ENCODE measurements at regions of chr11 and their contacts with region 1.

Region 1: DNA sequence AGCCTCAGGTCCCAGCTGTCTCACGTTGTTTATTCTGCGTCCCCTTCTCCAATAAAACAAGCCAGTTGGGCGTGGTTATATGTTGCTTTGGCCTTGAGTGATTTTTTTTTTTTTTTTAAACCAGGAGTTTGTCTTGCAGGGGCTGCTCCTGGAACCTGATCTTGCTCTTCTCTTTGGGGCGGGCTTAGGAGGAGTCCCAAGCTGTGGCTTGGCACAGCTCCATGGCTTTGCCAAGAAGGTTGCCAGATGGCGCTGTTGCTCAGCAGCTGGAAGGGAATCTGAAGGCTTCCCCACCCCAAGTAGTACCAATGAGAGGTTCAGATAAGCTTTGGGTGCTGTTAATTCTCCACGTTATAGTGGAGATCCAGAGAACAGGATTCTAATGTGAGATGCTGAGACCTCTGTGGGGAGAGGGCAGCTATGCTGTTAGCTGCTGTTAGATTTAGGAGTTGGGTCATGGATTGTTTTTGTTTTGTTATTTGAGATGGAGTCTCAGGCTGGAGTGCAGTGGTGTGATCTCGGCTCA is 2.0 kb upstream of the FERMT3 start:
- DNase-seq: peak; percentile 89 to 96 (median 93)
- ATAC-seq: peak; percentile 74
- H3K4me3 ChIP-seq: no peak overlapping the region
- H3K4me1 ChIP-seq: peaks cover 32% of the 10 kb centered on the region
- CTCF ChIP-seq: peak; percentile 59

Region 2: GRCh38 chr11:64269380-64270234 is 65.1 kb after region 1 on chr11:
- intact Hi-C with region 1: no loop called
- DNase-seq: peak; percentile 97 to 98 (median 98)
- ATAC-seq: peak; percentile 81
- H3K4me3 ChIP-seq: peak overlapping the region; percentile 46
- H3K4me1 ChIP-seq: peaks cover 35% of the 10 kb centered on the region
- CTCF ChIP-seq: no peak

Region 3: DNA sequence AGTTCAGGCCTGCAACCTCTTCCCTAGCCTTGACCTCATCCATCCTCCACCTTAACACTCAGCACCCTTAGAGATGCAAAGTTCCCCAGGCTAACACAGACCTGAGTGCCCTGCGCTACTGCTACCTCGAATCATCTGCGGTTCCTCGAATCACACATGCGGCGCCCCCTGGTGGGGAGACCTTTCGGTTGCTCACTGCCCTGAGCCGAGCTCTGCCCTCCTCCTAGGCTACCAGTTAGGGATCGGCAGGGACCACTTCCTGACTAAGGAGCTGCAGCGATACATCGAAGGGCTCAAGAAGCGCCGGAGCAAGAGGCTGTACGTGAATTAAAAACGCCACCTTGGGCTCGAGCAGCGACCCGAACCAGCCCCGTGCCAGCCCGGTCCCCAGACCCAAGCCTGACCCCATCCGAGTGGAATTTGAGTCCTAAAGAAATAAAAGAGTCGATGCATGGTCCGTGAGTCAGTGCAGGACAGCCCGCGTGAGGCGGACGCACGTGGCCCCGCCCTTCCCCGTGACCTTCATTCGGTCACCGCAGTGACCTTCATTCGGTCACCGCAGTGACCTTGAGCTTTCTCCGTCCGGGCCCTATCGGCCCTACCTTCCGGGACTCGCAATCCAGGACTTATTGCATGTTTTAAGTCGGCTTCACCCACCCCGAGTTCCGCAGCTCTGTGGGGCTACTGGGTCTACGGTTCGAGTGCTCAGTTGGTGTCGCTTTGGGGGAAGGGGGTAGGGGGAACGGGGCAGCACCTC is 100.0 kb after region 1 on chr11:
- intact Hi-C with region 1: loop called (anchors 5 to 10 kb)
- DNase-seq: peak; percentile 96 to 100 (median 97)
- ATAC-seq: peak; percentile 55
- H3K4me3 ChIP-seq: peak overlapping the region; percentile 78
- H3K4me1 ChIP-seq: peaks cover 41% of the 10 kb centered on the region
- CTCF ChIP-seq: peak; percentile 80

Measured in mucosa of descending colon (tissue), 3 donors.